Activated naive CD4-positive, alpha-beta T cell treated with anti-CD3 and anti-CD28 coated beads for 36 hours (primary cell): ENCODE measurements at regions of chrX and their contacts with region 1.

Region 1: DNA sequence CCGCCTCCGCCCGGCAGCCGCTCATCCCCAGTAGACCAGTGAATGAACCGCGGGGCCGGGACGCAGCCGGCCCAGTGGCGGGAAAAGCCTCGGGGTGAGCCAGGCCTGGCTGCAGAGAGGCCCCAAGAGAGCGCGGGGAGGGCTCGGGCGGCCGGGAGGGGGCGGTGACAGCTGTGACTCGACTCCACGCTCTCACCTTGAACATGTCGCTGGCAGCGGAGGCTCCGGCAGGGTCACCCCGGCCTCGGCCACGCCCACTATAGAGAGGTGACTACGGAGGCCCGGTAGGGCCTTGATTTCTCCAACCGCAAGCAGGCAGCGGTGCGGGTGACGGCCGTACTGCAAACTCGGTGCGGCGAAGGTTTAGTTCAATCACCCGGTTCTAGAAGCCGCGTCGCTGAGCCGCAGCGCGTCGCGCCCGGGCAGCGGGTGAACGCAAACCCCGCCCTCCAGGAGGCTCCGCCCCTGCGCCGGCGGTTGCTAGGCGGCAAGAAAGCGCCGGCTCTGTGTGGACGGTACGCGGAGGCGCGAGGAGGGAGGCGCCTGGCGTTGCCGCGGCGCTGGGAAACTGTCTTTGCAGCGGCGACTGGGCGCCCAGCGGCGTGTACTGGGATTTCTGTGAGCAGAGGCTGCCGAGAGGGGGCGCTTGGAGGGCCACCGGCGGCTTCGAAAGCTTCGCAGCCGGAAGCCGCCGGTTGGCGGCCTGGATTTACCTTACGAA is at the starts of genes APOO and CXorf58:
- DNase-seq: peak; percentile 93
- H3K4me3 Mint-ChIP-seq: peak within 1 kb of the TSS; percentile 75
- H3K27ac Mint-ChIP-seq: peak within 1 kb of the TSS; percentile 91
- H3K4me1 Mint-ChIP-seq: peaks cover 21% of the 10 kb centered on the region
- H3K27me3 Mint-ChIP-seq: no peaks in the 10 kb centered on the region
- total RNA-seq, gene APOO: 41.3 to 49.5 TPM
- total RNA-seq, gene CXorf58: 0.20 TPM in 1 of 2 experiments, not detected in the other

Region 2: DNA sequence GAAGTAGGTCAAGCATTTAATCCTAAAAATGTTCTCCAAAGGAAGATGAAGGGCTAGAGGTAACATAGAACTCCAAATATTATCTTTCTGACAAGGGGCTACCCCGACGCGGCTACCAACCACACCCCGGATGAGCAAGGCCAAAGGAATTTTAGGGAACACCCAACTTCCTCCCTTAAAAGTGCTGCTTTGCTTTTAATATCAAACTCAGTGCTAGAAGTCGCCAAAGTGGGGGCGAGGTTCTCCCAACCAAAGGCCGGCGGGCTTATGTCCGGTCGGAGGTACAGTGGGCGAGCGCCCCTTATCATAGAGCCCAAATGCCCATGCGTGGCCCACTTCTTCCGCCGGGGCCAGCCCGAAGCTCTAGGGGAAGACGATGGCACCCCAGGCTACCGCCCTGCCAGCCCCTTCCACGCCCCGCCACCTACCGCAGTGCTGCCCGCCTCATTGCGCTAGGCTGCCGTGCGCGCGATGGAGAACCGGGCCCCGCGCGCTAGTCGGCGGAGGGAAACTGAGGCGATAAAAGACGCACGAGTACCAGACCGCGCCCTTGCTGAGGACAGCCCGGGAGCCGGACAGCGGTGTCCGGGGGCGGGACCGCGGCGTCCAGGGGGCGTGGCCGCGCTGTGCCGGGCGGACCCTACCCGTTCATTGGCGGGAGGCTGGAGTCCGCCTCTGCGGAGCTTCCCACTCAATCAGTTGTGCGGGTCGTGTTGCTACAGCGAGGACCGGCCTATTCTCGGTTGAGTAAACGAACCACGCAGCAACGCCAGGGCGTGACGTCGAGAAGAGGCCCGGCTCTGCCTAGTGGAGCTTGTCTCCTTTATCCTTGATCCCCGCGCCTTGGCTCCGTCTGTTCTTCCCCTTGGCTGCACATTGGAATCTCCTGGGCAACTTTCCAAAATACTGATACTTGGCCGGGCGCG is 164.7 kb before region 1 on chrX and contains the start of gene ACOT9:
- CTCF ChIA-PET with region 1: interaction called, 10 read pairs
- intact Hi-C with region 1: loop called (anchors 2 kb)
- DNase-seq: peak; percentile 85
- H3K4me3 Mint-ChIP-seq: peak within 1 kb of the TSS; percentile 83
- H3K27ac Mint-ChIP-seq: peak within 1 kb of the TSS; percentile 84
- H3K4me1 Mint-ChIP-seq: peaks cover 23% of the 10 kb centered on the region
- H3K27me3 Mint-ChIP-seq: no peaks in the 10 kb centered on the region
- total RNA-seq, gene ACOT9: 46.8 to 49.7 TPM

Region 3: GRCh38 chrX:24014388-24015018 is 106.8 kb after region 1 on chrX:
- CTCF ChIA-PET with region 1: interaction called, 3 read pairs
- intact Hi-C with region 1: loop called (anchors 1 kb)
- DNase-seq: peak; percentile 76
- H3K4me3 Mint-ChIP-seq: peak overlapping the region; percentile 67
- H3K27ac Mint-ChIP-seq: peak overlapping the region; percentile 92
- H3K4me1 Mint-ChIP-seq: peaks cover 37% of the 10 kb centered on the region
- H3K27me3 Mint-ChIP-seq: no peaks in the 10 kb centered on the region

Region 4: GRCh38 chrX:24054182-24055042 is 146.8 kb after region 1 on chrX and contains the start of gene EIF2S3:
- CTCF ChIA-PET with region 1: interaction called, 11 read pairs
- intact Hi-C with region 1: loop called (anchors 1 kb)
- DNase-seq: peak; percentile 87
- H3K4me3 Mint-ChIP-seq: no peak within 1 kb of the TSS
- H3K27ac Mint-ChIP-seq: no peak within 1 kb of the TSS
- H3K4me1 Mint-ChIP-seq: peaks cover 10% of the 10 kb centered on the region
- H3K27me3 Mint-ChIP-seq: no peaks in the 10 kb centered on the region
- total RNA-seq, gene EIF2S3: 366 to 386 TPM

Region 5: DNA sequence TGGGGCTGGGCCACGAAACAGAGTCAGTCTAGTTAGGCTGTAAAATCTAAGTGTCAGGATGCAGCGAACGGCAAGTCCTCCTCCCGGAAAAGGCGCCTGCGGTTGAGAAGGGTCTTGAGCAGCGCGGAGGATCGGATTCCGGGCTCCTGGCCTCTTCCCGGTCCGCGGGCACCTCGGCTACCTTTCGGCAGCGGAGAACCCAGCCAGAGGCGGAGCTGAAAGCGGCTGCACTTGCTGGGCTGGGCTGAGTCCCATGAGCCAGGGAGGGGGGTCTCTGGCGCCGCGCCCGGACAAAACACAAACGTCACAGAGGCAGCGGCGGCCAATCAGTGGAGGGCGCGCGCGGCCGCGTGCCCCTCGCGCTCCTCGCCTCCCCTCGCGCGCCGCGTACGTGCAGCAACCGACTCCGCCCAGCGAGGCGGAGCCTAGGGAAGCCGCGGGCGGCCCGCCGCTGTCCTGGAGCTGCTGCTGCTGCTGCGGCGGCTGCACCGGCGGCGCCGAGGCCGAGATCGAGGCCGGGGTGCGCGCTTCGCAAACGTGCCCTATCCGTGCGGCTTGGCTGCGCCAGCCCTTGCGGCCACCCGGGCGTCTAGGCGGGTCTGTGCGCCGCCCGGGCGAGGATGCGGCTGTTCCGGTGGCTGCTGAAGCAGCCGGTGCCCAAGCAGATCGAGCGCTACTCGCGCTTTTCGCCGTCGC is 557.3 kb after region 1 on chrX and contains the start of gene PDK3:
- CTCF ChIA-PET with region 1: no interaction called
- intact Hi-C with region 1: loop called (anchors 5 kb)
- DNase-seq: peak; percentile 85
- H3K4me3 Mint-ChIP-seq: peak within 1 kb of the TSS; percentile 81
- H3K27ac Mint-ChIP-seq: peak within 1 kb of the TSS; percentile 82
- H3K4me1 Mint-ChIP-seq: peaks cover 30% of the 10 kb centered on the region
- H3K27me3 Mint-ChIP-seq: no peaks in the 10 kb centered on the region
- total RNA-seq, gene PDK3: 31.7 to 32.3 TPM